ENCODE measurements at regions of chr17 and their contacts with region 1.

Region 1: DNA sequence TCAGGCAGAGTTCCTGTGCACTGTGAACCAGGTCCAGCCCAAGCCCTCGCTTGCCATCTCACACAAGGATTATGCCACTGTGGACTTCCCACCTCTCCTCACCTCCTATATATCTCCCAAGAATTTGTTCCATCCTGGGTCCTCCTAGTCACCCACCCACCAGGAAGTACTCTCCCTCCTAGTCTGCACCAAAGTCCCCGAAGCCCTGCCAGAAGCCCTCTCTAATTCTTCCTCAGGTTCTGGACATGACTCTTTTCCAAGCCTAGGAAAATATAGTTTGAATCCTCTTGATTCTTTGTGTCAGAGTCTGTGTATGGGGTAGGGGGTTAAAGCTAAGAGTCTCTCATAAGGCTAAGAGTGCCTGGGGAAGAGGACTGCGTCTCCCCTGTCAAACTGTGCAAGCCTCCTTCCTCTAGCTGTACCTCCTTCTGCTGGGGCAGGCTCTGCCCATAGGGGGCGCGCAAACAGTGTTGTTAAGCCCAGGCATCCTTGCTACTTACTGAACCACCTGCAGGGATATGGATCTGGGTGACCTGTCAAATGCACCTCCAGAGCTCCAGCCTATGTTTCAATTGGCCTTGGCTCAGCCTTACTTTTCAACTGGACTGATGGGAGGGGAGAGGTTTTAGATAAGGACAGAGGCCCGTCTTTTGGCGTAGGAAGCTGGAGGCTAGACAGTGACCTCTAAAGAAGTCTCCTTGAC is 16.6 kb upstream of the DLX4 start:
- DNase-seq: peak; percentile 96 to 98
- H3K4me3 ChIP-seq: no peak overlapping the region
- H3K4me3 Mint-ChIP-seq: no peak overlapping the region
- H3K27ac Mint-ChIP-seq: peak overlapping the region; percentile 7
- H3K4me1 ChIP-seq: peaks cover 7% of the 10 kb centered on the region
- H3K4me1 Mint-ChIP-seq: peaks cover 25% of the 10 kb centered on the region
- H3K27me3 ChIP-seq: no peaks in the 10 kb centered on the region
- H3K27me3 Mint-ChIP-seq: no peaks in the 10 kb centered on the region
- CTCF ChIP-seq: peak; percentile 99 to 100

Region 2: DNA sequence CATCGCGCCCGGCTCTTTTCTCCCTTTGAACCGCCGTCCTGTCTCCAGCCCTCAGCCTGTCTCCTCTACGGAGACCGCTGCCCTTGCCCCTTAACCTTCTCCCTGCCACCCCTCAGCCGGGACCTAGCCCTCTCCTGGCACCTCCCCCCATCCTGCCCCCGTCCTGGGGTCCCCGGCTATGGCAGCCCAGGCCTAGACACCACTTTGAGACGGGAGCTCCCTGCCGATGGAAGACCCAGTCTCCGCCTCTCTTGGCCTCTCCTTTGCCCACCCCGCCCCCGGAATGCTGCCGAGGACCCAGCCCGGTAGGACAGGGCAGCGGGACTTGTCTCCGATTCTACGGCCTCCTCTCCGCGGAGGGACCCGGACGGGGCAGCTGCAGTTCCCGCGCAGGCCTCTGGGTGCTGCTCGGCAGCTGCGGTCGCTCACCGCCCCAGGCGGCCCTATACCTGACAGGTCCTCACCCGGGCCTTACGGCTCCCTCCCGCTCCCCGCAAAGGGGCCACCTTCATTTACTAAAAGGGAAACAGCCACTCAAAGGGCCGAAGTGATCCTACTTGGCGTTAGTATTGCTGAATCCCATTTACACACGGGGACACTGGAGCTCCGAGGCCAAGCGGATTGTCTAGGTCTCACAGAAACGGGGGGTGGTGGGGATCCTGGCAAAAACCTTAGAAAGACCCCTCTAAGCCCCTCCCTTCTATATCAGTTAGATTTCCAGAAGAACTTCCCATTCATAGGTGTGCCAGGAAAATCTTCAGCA is 71.9 kb before region 1 on chr17:
- CTCF ChIA-PET with region 1: interaction called, 8 read pairs
- POLR2A ChIA-PET with region 1: no interaction called
- intact Hi-C with region 1: loop called (anchors 1 kb)
- DNase-seq: peak; percentile 98 to 100
- H3K4me3 ChIP-seq: peak overlapping the region; percentile 4; the same call in 1 of the 2 replicates
- H3K4me3 Mint-ChIP-seq: peak overlapping the region; percentile 63
- H3K27ac Mint-ChIP-seq: peak overlapping the region; percentile 83
- H3K4me1 ChIP-seq: peaks cover 57% of the 10 kb centered on the region
- H3K4me1 Mint-ChIP-seq: peaks cover 39% of the 10 kb centered on the region
- H3K27me3 ChIP-seq: no peaks in the 10 kb centered on the region
- H3K27me3 Mint-ChIP-seq: no peaks in the 10 kb centered on the region
- CTCF ChIP-seq: peak; percentile 100

Region 3: GRCh38 chr17:49915670-49916069 is 36.7 kb before region 1 on chr17:
- CTCF ChIA-PET with region 1: interaction called, 17 read pairs
- POLR2A ChIA-PET with region 1: no interaction called
- intact Hi-C with region 1: no loop called
- DNase-seq: peak; percentile 88 to 93
- H3K4me3 ChIP-seq: no peak overlapping the region
- H3K4me3 Mint-ChIP-seq: peak overlapping the region; percentile 8
- H3K27ac Mint-ChIP-seq: peak overlapping the region; percentile 64
- H3K4me1 ChIP-seq: peaks cover 46% of the 10 kb centered on the region
- H3K4me1 Mint-ChIP-seq: peaks cover 52% of the 10 kb centered on the region
- H3K27me3 ChIP-seq: no peaks in the 10 kb centered on the region
- H3K27me3 Mint-ChIP-seq: no peaks in the 10 kb centered on the region
- CTCF ChIP-seq: no peak

Region 4: GRCh38 chr17:49962599-49963308 is 10.4 kb after region 1 on chr17:
- CTCF ChIA-PET with region 1: interaction called, 12 read pairs
- POLR2A ChIA-PET with region 1: interaction called, 6 read pairs
- intact Hi-C with region 1: no loop called
- DNase-seq: no peak
- H3K4me3 ChIP-seq: no peak overlapping the region
- H3K4me3 Mint-ChIP-seq: no peak overlapping the region
- H3K27ac Mint-ChIP-seq: no peak overlapping the region
- H3K4me1 ChIP-seq: no peaks in the 10 kb centered on the region; the same call in 1 of the 2 replicates
- H3K4me1 Mint-ChIP-seq: peaks cover 12% of the 10 kb centered on the region
- H3K27me3 ChIP-seq: no peaks in the 10 kb centered on the region
- H3K27me3 Mint-ChIP-seq: peaks cover 3% of the 10 kb centered on the region
- CTCF ChIP-seq: no peak

Region 5: DNA sequence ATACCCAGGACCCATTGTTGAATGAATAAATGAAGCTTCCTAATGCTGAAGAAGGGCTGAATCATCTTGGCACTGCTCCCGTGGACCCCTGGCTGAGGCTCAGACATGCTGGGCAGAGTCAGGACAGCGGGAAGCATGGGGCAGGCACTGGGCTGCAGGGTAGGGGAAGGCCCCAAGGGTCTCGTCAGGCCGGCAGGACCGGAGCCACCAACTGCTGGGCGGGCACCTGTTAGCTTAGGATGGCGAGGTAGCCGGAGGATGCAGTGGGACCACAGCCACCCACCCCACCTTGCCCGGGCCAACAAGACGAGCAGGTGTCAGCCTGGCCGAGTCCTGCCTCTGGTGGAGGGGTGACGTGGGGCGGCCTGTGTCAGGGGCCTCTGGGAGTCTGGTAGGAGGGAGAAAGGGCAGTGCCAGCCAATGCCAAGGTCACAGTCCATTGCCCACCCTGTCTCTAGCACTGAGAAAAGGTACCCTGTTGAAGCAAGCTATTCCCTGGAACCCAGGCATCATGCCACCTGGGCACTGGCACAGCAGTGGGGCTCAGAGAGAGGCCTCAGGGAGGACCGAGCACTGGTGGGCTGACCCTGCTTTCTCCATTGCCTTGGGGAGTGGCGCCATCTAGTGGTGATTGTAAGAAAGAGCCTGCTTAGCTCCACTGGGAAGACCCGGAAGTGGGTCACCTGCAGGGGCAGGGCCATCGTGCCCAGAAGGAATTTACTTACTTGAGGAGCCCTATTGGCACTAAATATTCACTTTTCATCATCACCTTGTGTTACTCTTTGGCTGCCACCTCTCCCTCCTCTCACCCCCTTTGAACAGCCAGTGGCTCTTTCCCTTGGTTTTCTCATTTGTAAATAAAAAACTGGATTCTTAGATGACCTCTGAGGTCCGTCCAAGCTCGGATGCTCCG is 45.7 kb after region 1 on chr17:
- CTCF ChIA-PET with region 1: interaction called, 8 read pairs
- POLR2A ChIA-PET with region 1: no interaction called
- intact Hi-C with region 1: loop called (anchors 1 kb)
- DNase-seq: peak; percentile 76 to 82
- H3K4me3 ChIP-seq: no peak overlapping the region
- H3K4me3 Mint-ChIP-seq: peak overlapping the region; percentile 31
- H3K27ac Mint-ChIP-seq: no peak overlapping the region
- H3K4me1 ChIP-seq: no peaks in the 10 kb centered on the region
- H3K4me1 Mint-ChIP-seq: peaks cover 14% of the 10 kb centered on the region
- H3K27me3 ChIP-seq: no peaks in the 10 kb centered on the region
- H3K27me3 Mint-ChIP-seq: peaks cover 14% of the 10 kb centered on the region
- CTCF ChIP-seq: peak; percentile 63 to 72

Region 6: DNA sequence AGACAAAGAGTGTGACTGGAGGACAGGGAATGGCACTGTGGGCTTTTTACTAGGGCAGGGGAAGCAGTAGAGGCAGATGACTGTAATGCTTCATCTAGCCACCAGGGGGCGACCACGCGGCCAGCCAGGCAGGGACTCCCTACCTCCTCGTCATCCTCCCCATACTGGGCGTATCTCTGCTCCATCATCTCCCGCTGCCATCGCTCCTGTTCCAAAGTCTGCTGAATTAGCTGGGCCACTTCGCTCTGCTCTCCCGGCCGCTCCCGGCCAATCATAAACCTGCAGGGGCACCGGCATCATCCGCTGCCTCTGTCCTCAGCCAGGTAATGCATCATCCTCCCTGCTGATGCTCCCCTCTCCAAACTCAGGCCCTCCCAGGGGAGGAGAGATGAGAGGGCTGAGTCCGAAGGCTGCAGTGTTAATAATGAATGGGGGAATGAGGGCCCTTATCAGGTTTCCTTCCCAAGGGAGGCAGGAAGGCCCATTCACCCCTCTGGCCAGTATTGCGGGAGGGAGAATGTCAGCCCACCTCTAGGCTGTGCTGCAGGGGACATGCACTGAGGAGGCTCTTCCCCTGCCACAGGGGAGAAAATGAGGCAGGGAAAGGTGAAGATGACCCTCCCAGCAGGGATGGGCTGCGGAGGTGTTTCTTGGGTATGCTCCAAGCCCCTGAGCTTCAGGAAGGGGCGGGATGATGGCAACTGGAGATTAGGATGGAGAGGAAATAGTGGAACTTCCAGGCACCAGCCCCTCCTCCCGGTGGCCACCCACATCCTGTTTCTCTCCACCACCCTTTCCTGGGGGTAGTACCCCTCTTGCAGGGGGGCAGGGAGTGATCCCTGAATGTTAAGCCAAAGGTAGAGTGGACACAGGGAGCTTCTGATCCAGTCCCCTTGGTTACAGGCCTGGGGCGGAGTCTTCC is 187.9 kb after region 1 on chr17:
- CTCF ChIA-PET with region 1: interaction called, 9 read pairs
- POLR2A ChIA-PET with region 1: no interaction called
- intact Hi-C with region 1: loop called (anchors 2 kb)
- DNase-seq: peak; percentile 89 to 93
- H3K4me3 ChIP-seq: no peak overlapping the region
- H3K4me3 Mint-ChIP-seq: no peak overlapping the region
- H3K27ac Mint-ChIP-seq: no peak overlapping the region
- H3K4me1 ChIP-seq: no peaks in the 10 kb centered on the region
- H3K4me1 Mint-ChIP-seq: peaks cover 4% of the 10 kb centered on the region
- H3K27me3 ChIP-seq: no peaks in the 10 kb centered on the region
- H3K27me3 Mint-ChIP-seq: no peaks in the 10 kb centered on the region
- CTCF ChIP-seq: peak; percentile 99 to 100

Measured in Caco-2 (cell line).